ENCODE measurements at regions of chr1 and their contacts with region 1.

Region 1: GRCh38 chr1:117795190-117795589 is 134.2 kb downstream of the GDAP2 start:
- DNase-seq: peak; percentile 96
- ATAC-seq: peak; percentile 90
- H3K4me3 ChIP-seq: no peak overlapping the region
- H3K27ac ChIP-seq: peak overlapping the region; percentile 92
- H3K4me1 ChIP-seq: peaks cover 24% of the 10 kb centered on the region
- H3K27me3 ChIP-seq: no peaks in the 10 kb centered on the region
- CTCF ChIP-seq: peak; percentile 64

Region 2: DNA sequence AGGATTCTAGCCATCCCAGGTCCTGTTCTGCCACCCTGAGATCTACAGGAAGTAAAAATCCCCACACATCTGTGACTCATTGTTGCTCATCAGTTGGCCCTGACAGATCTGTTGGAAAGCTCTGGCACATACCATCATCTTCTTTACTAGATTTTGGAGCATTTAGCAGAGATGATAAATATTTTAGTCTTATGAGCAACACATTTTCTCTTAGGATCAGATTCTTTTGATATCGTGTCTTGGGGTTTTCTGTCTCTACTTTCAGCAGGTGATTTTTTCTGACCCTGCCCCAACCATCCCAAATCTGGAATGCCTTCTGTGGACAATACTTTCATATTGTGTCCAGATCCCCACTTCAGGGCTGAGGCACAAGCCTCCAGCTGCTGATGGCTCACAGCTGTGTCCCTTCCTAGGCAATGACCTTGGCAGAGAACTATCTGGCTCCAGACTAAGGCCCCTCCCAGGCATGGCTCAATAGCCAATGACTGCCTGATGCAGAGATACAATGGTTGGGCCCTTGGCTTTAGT is 31.4 kb after region 1 on chr1:
- CTCF ChIA-PET with region 1: interaction called, 3 read pairs
- POLR2A ChIA-PET with region 1: interaction called, 11 read pairs
- intact Hi-C with region 1: no loop called
- DNase-seq: peak; percentile 97
- ATAC-seq: peak; percentile 81
- H3K4me3 ChIP-seq: peak overlapping the region; percentile 24; the same call in 1 of the 2 replicates
- H3K27ac ChIP-seq: peak overlapping the region; percentile 85
- H3K4me1 ChIP-seq: peaks cover 47% of the 10 kb centered on the region
- H3K27me3 ChIP-seq: no peaks in the 10 kb centered on the region
- CTCF ChIP-seq: no peak